GM12878 (cell line): ENCODE measurements at regions of chr6 and their contacts with region 1.

Region 1: DNA sequence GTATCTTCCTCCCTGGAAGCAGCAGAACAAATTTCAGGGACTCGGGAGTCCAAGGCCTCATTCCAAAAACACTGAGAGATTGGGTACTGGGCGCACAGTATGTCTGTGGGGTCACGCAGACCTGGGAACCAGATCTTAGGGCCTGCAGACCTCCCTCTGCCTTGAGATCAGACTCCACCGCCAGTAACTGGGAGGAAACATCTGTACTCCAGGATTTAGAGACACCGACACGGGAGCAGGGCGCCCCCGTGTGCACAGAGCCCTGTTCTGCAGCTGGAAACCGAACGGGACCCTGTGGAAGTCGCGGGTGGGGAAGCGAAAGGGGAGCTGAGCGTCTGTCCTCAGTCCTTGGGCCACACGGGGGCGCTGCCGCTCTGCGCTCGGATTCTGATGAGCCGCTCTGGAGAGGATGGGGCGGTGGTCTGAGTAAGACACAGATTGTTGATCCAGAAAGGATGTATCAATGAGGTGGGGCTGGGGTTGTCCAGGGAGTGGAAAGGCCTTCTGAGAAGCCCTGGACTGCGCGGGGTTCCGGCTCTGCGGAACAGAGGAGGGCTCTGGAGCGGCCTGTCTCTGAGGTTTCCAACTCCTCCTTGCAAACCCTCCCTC is 35.7 kb upstream of the HLA-E start:
- DNase-seq: no peak
- ATAC-seq: peak; percentile 94
- H3K4me3 ChIP-seq: no peak overlapping the region
- H3K27ac ChIP-seq: no peak overlapping the region
- H3K4me1 ChIP-seq: peaks cover 18% of the 10 kb centered on the region
- H3K27me3 ChIP-seq: peaks cover 13 to 23% of the 10 kb centered on the region in 2 experiments
- CTCF ChIP-seq: peak; percentile 54 to 78 (median 65)
- EP300 ChIP-seq: no peak
- POLR2A ChIP-seq: no peak
- RAD21 ChIP-seq: peak; percentile 53

Region 2: GRCh38 chr6:30066577-30067459 is 386.8 kb before region 1 on chr6 and contains the start of gene PPP1R11:
- CTCF ChIA-PET with region 1: no interaction called
- POLR2A ChIA-PET with region 1: no interaction called
- RAD21 ChIA-PET with region 1: no interaction called
- SMC1A ChIA-PET with region 1: no interaction called
- in situ Hi-C with region 1: no loop called
- intact Hi-C with region 1: no loop called
- DNase-seq: peak; percentile 99
- ATAC-seq: peak; percentile 99
- H3K4me3 ChIP-seq: peak within 1 kb of the TSS; percentile 84
- H3K27ac ChIP-seq: peak within 1 kb of the TSS; percentile 88
- H3K4me1 ChIP-seq: no peaks in the 10 kb centered on the region
- H3K27me3 ChIP-seq: peaks cover 0 to 3% of the 10 kb centered on the region in 2 experiments; a peak in 2 of 4 replicates
- CTCF ChIP-seq: no peak
- EP300 ChIP-seq: peak in 1 of 2 experiments; percentile 63; a peak in 2 of 4 replicates
- POLR2A ChIP-seq: peak; percentile 91
- RAD21 ChIP-seq: no peak
- polyA plus RNA-seq, gene PPP1R11: 12.6 to 13.4 TPM

Region 3: DNA sequence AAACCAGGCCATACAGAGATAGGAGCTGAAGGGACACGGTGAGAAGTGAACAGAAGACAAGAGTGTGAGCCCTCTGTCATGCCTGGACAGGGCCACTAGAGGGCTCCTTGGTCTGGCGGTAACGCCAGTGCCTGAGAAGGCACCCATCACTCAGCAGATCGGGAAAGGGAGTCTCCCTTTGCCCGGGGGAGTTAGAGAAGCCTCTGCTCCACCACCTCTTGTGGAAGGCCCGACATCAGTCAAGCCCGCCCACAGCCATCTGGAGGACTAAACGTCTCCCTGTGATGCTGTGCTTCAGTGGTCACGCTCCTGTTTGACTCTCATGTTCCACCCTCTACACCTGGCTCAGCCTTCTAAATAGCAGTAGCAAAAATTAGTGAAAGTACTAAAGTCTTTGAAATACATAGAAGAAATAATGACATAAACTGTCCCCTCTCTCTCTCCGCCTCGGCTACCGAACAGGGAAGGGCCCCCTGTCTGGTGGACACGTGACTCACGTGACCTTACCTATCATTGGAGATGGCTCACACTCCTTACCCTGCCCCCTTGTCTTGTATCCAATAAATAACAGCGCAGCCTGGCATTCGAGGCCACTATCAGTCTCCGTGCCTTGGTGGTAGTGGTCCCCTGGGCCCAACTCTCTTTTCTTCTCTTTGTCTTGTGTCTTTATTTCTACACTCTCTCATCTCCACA is 42.0 kb before region 1 on chr6:
- CTCF ChIA-PET with region 1: interaction called, 10 read pairs
- POLR2A ChIA-PET with region 1: no interaction called
- RAD21 ChIA-PET with region 1: no interaction called
- SMC1A ChIA-PET with region 1: interaction called, 6 read pairs
- in situ Hi-C with region 1: no loop called
- intact Hi-C with region 1: loop called (anchors 5 kb)
- DNase-seq: no peak
- ATAC-seq: peak; percentile 67
- H3K4me3 ChIP-seq: no peak overlapping the region
- H3K27ac ChIP-seq: no peak overlapping the region
- H3K4me1 ChIP-seq: no peaks in the 10 kb centered on the region
- H3K27me3 ChIP-seq: peaks cover 0 to 3% of the 10 kb centered on the region in 2 experiments
- CTCF ChIP-seq: peak; percentile 54 to 90 (median 78)
- EP300 ChIP-seq: no peak
- POLR2A ChIP-seq: no peak
- RAD21 ChIP-seq: peak; percentile 51; the same call in 1 of the 2 replicates

Region 4: DNA sequence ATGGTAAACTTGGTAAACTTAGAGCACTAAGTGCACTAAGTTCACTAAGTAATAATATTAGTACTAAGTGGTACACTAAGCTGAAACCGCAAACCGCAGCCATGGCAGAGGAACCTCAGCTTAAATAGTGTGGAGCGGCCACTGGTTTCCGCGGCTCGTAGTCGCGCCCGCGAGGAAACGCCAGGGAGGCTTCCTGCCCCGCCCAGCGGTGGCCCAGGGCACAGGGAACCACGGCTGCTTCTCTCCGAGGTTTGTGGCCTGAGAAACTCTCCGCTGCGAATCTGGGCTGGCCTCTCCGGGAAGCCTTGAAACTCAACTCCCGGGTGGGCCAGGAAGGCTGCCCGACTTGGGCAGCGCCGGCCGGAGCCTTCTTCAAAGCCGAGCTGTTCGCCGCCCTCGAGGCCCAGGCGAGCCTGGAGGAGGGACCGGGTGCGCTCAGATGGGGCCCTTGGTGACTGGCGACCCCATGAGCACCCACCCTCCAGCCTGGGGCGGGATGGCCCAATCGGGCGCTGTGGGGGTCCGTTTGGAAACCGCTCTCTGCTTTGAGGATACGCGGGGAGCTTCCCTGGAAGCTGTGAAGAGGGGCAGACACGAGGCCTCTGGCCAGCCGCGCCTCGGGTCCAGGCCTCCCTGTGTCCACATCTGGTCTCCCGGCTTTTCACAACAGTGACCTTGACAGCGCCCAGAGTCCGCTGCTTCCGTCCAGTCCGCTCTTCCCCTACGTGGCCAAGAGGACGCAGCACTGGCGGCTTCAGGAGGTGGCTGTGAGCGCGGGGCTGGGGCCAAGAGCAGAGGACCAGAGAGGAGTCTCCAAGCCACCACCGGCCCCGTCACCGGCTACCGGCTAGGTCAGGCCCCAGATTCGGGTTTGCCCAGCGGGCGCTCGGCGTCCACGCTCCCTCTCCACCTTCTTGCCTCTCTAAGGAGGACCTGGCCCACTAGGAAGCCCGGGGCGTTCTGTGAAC is 10.3 kb after region 1 on chr6:
- CTCF ChIA-PET with region 1: interaction called, 19 read pairs
- POLR2A ChIA-PET with region 1: no interaction called
- RAD21 ChIA-PET with region 1: interaction called, 5 read pairs
- SMC1A ChIA-PET with region 1: interaction called, 4 read pairs
- in situ Hi-C with region 1: no loop called
- intact Hi-C with region 1: no loop called
- DNase-seq: peak; percentile 15
- ATAC-seq: peak; percentile 77
- H3K4me3 ChIP-seq: no peak overlapping the region
- H3K27ac ChIP-seq: no peak overlapping the region
- H3K4me1 ChIP-seq: peaks cover 5% of the 10 kb centered on the region; the same call in 1 of the 2 replicates
- H3K27me3 ChIP-seq: peaks cover 22 to 39% of the 10 kb centered on the region in 2 experiments
- CTCF ChIP-seq: no peak
- EP300 ChIP-seq: peak in 1 of 2 experiments; percentile 21; a peak in 1 of 4 replicates
- POLR2A ChIP-seq: no peak
- RAD21 ChIP-seq: no peak

Region 5: DNA sequence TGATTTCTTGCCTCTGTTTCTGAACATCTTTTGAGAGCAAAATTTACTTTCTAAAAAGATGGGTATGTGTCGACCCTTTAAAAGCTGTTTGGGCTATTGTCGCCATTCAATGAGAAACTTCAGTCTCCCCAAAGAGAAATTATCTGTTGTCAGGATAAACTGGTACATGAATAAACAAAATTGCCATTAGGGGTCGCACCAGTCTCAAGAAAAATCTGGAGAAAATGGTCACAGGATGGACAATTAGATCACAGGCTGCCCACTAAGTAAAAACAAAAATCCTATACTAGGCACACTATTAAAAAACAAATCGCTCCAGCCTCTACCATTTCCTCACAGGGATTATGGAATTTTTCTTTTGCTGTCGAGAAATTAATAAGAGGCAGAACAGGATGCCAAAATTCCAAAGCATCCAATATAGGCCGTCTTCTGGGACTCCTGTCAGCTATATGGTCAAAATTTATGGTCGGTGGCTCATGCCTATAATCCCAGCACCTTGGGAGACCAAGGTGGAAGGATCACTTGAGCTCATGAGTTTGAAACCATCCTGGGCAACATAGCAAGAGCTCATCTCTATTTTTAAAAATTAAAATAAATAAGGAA is 30.2 kb after region 1 on chr6:
- CTCF ChIA-PET with region 1: interaction called, 16 read pairs
- POLR2A ChIA-PET with region 1: no interaction called
- RAD21 ChIA-PET with region 1: interaction called, 8 read pairs
- SMC1A ChIA-PET with region 1: interaction called, 3 read pairs
- in situ Hi-C with region 1: no loop called
- intact Hi-C with region 1: no loop called
- DNase-seq: peak; percentile 37
- ATAC-seq: peak; percentile 48
- H3K4me3 ChIP-seq: no peak overlapping the region
- H3K27ac ChIP-seq: no peak overlapping the region
- H3K4me1 ChIP-seq: peaks cover 12% of the 10 kb centered on the region; the same call in 1 of the 2 replicates
- H3K27me3 ChIP-seq: peaks cover 2 to 8% of the 10 kb centered on the region in 2 experiments; a peak in 3 of 4 replicates
- CTCF ChIP-seq: peak; percentile 47 to 73 (median 56); a peak in 5 of 6 replicates
- EP300 ChIP-seq: no peak
- POLR2A ChIP-seq: no peak
- RAD21 ChIP-seq: peak; percentile 90

Region 6: DNA sequence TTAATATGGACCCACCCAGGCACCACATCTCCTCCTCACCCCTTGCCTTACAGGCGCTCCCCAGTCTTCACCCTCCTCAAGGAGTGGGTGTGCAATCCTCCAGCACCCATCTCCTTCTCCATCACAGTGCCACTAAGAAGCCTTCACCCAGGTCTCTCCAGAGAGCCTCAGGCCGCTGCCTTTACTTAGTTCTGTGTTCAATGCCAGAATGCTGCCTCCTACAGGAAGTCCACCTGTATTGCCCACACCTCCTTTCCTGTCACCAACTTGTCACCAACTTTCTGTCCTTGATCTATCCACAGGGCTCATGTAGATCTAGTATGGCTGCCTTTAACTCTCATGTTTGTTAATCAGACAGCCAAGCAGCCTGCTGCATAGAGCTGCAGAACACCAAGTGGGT is 1131.9 kb after region 1 on chr6:
- CTCF ChIA-PET with region 1: no interaction called
- POLR2A ChIA-PET with region 1: no interaction called
- RAD21 ChIA-PET with region 1: no interaction called
- SMC1A ChIA-PET with region 1: no interaction called
- in situ Hi-C with region 1: no loop called
- intact Hi-C with region 1: no loop called
- DNase-seq: no peak
- ATAC-seq: peak; percentile 34
- H3K4me3 ChIP-seq: no peak overlapping the region
- H3K27ac ChIP-seq: peak overlapping the region; percentile 75
- H3K4me1 ChIP-seq: peaks cover 46% of the 10 kb centered on the region
- H3K27me3 ChIP-seq: no peaks in the 10 kb centered on the region
- CTCF ChIP-seq: peak; percentile 39 to 76 (median 67)
- EP300 ChIP-seq: no peak
- POLR2A ChIP-seq: no peak
- RAD21 ChIP-seq: peak; percentile 53